MCF 10A (cell line): ENCODE measurements at regions of chr12 and their contacts with region 1.

Region 1: GRCh38 chr12:102879144-102879763 is 37.8 kb downstream of the PAH start:
- DNase-seq: peak; percentile 86
- H3K4me3 Mint-ChIP-seq: no peak overlapping the region
- H3K27ac Mint-ChIP-seq: no peak overlapping the region
- H3K4me1 Mint-ChIP-seq: peaks cover 6% of the 10 kb centered on the region
- H3K27me3 Mint-ChIP-seq: peaks cover 33% of the 10 kb centered on the region
- CTCF ChIP-seq: peak; percentile 65

Region 2: GRCh38 chr12:101773650-101774162 is 1105.5 kb before region 1 on chr12:
- CTCF ChIA-PET with region 1: no interaction called
- POLR2A ChIA-PET with region 1: no interaction called
- intact Hi-C with region 1: loop called (anchors 5 kb)
- DNase-seq: peak; percentile 76
- H3K4me3 Mint-ChIP-seq: no peak overlapping the region
- H3K27ac Mint-ChIP-seq: peak overlapping the region; percentile 55
- H3K4me1 Mint-ChIP-seq: no peaks in the 10 kb centered on the region
- H3K27me3 Mint-ChIP-seq: no peaks in the 10 kb centered on the region
- CTCF ChIP-seq: peak; percentile 94

Region 3: DNA sequence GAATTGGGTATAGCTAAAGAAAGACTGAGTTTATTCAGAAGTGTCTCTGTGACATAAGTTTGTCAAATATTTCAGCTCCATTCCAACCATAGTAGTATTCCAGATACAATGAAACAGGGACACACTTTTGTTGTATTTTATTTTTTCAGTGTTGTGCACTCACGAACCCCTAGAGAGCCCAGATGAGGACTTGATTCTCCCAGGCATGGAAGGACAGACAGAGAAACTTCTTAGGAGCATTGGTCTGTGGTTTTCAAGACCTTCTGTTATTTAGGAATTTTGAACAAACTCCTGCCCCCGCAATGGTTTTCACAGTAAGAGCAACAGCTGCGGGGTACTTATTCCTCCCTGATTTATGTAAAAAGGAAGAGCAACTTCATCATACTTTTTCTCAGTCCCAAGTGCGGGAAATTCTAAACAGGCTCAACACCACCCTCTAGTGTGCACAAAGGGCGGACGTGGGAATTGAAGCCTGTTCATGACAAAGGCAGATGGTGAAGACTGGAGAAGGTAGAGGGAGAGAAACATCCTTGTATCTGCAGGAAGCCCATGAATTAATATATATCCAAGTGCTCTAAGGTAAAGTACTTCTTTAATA is 109.8 kb before region 1 on chr12:
- CTCF ChIA-PET with region 1: interaction called, 8 read pairs
- POLR2A ChIA-PET with region 1: no interaction called
- intact Hi-C with region 1: loop called (anchors 2 kb)
- DNase-seq: peak; percentile 71
- H3K4me3 Mint-ChIP-seq: no peak overlapping the region
- H3K27ac Mint-ChIP-seq: no peak overlapping the region
- H3K4me1 Mint-ChIP-seq: no peaks in the 10 kb centered on the region
- H3K27me3 Mint-ChIP-seq: no peaks in the 10 kb centered on the region
- CTCF ChIP-seq: peak; percentile 54

Region 4: GRCh38 chr12:102896067-102896466 is 16.8 kb after region 1 on chr12:
- CTCF ChIA-PET with region 1: interaction called, 33 read pairs
- POLR2A ChIA-PET with region 1: no interaction called
- intact Hi-C with region 1: no loop called
- DNase-seq: no peak
- H3K4me3 Mint-ChIP-seq: no peak overlapping the region
- H3K27ac Mint-ChIP-seq: no peak overlapping the region
- H3K4me1 Mint-ChIP-seq: no peaks in the 10 kb centered on the region
- H3K27me3 Mint-ChIP-seq: no peaks in the 10 kb centered on the region
- CTCF ChIP-seq: no peak

Region 5: GRCh38 chr12:103313894-103314293 is 434.6 kb after region 1 on chr12:
- CTCF ChIA-PET with region 1: interaction called, 10 read pairs
- POLR2A ChIA-PET with region 1: no interaction called
- intact Hi-C with region 1: no loop called
- DNase-seq: no peak
- H3K4me3 Mint-ChIP-seq: no peak overlapping the region
- H3K27ac Mint-ChIP-seq: no peak overlapping the region
- H3K4me1 Mint-ChIP-seq: no peaks in the 10 kb centered on the region
- H3K27me3 Mint-ChIP-seq: peaks cover 22% of the 10 kb centered on the region
- CTCF ChIP-seq: no peak